Panc1 (cell line): ENCODE measurements at regions of chr5 and their contacts with region 1.

Region 1: DNA sequence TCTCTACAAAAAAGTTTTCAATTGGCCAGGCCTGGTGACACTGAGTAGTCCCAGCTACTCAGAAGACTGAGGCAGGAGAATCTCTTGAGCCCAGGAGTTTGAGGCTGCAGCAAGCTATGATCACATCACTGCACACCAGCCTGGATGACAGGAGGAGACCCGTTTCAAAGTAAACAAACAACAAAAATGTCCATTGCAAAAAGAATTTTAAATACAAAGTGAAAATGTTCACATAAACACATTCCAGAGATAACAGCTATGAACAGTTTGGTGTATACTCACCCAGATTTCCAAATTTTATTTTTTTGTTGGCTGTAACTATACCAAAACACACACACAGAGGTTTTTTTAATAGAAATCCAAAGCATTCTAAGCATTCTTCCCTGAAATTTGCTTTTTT is 39.8 kb downstream of the ADRA1B start:
- DNase-seq: no peak
- ATAC-seq: no peak
- H3K4me3 ChIP-seq: no peak overlapping the region
- H3K27ac ChIP-seq: no peak overlapping the region
- H3K4me1 ChIP-seq: no peaks in the 10 kb centered on the region
- H3K27me3 ChIP-seq: no peaks in the 10 kb centered on the region
- CTCF ChIP-seq: no peak

Region 2: GRCh38 chr5:158979749-158980521 is 976.1 kb before region 1 on chr5:
- CTCF ChIA-PET with region 1: interaction called, 14 read pairs
- POLR2A ChIA-PET with region 1: no interaction called
- in situ Hi-C with region 1: no loop called
- intact Hi-C with region 1: no loop called
- DNase-seq: no peak
- ATAC-seq: no peak
- H3K4me3 ChIP-seq: peak overlapping the region in 1 of 2 experiments; percentile 26; a peak in 2 of 4 replicates
- H3K27ac ChIP-seq: no peak overlapping the region
- H3K4me1 ChIP-seq: no peaks in the 10 kb centered on the region
- H3K27me3 ChIP-seq: peaks cover 2% of the 10 kb centered on the region; the same call in 1 of the 2 replicates
- CTCF ChIP-seq: no peak